AG04450 (cell line): ENCODE measurements at regions of chr7 and their contacts with region 1.

Region 1: GRCh38 chr7:116426428-116427156 is 72.9 kb upstream of the CAV2 start:
- DNase-seq: peak; percentile 16
- H3K4me3 ChIP-seq: no peak overlapping the region
- H3K27ac ChIP-seq: no peak overlapping the region
- H3K27me3 ChIP-seq: no peaks in the 10 kb centered on the region
- CTCF ChIP-seq: no peak

Region 2: DNA sequence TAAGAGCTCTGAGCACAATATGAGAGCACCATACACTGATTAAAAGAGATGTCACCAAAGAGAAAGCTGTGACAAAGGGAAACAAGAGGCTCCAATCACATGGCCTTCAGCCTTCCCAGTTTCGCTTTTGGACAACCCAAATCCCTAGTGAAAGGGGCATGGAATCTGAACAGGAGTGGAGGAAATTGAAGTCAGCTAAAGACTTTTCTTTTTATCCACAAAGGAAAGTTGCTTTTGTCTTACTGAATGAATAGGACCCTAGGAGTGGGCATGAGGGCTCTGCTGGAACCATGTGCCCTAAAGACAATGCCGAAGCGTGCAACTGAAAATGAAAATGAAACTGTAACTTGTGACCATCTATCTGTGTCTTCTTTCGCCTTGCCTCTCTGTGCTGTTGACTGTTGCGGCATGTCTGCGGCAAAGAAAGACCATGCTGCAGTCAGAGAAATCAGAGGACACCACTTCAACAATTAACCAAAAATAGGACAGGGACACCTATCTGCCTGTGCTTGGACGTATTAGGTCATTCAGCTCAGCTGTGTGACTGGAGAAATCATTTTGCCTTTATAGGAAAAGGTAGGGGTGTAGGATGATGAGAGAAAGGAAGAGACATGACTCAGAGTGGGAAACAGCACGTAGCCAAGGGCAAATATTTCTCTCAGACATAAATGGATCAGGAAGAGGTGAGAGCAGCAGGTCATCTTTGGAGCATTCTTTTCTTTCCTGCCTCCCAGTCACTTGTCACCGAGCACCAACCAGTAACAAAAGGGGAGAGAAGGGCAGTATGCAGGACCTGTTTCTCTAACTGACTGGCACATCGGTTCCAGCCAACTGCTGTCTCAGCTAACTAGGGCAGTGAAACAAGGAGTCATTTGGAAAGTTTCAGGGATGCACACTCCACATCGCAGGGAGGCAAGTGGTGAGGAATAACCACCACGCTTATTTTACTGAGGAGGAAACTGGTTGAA is 85.2 kb after region 1 on chr7:
- CTCF ChIA-PET with region 1: no interaction called
- POLR2A ChIA-PET with region 1: interaction called, 10 read pairs
- DNase-seq: no peak
- H3K4me3 ChIP-seq: peak overlapping the region; percentile 15; the same call in 1 of the 2 replicates
- H3K27ac ChIP-seq: peak overlapping the region; percentile 78
- H3K27me3 ChIP-seq: no peaks in the 10 kb centered on the region
- CTCF ChIP-seq: no peak